ENCODE measurements at regions of chr17 and their contacts with region 1.

Region 1: GRCh38 chr17:76737082-76737675 is at the start of gene SRSF2:
- DNase-seq: peak; percentile 100
- ATAC-seq: peak; percentile 68
- H3K4me3 ChIP-seq: peak within 1 kb of the TSS; percentile 89
- H3K27ac ChIP-seq: peak within 1 kb of the TSS; percentile 89
- H3K4me1 ChIP-seq: peaks cover 37% of the 10 kb centered on the region
- H3K27me3 ChIP-seq: no peaks in the 10 kb centered on the region
- CTCF ChIP-seq: no peak
- total RNA-seq, gene SRSF2: 562 and 859 TPM in 2 replicates

Region 2: DNA sequence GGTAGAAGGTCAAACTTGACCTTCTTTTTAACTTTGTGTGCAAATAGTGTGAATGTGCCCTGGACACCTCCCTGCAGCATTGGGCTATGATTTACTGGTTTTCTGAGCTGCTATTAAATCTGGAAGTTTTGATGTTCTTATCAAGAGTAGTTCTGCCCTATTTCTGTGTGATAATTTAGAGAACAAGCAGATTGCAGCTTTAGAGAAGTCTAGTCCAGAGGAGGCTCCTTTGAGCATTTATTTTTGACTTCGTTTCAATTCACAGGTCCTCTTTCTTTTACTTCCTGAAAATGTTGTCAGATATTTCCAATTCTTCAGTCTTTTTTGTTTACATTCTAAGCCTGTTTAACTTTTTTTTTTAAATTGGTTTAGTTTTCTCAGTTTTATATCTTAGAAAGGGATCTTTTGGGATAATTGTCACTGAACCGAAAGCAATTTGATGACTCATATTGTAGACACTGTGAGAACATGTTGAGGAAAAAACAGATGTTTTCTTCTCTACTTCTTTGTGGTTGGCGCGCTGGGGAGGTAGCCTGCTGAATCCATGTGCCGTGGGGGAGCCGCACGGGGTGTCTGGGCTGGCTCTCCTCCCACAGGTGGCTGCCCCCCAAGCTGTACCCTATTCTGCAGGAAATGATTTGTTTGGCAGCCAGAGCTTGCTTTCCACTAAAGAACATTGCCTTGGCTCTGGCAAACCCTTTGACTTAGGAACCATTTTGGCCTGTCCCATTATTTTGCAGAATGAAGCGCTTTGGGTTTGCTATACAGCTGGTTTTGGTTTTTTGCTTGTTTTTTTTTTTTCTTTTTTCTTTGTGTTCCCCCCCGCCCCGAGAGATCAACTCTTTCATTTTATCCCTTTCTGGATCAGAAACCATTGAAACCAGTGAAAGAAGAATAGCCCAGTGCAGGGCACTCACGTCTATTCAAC is 54.1 kb after region 1 on chr17:
- CTCF ChIA-PET with region 1: no interaction called
- POLR2A ChIA-PET with region 1: no interaction called
- intact Hi-C with region 1: loop called (anchors 1 kb)
- DNase-seq: peak; percentile 83
- ATAC-seq: peak; percentile 84
- H3K4me3 ChIP-seq: peak overlapping the region; percentile 27; the same call in 1 of the 2 replicates
- H3K27ac ChIP-seq: peak overlapping the region; percentile 51
- H3K4me1 ChIP-seq: peaks cover 24% of the 10 kb centered on the region
- H3K27me3 ChIP-seq: no peaks in the 10 kb centered on the region
- CTCF ChIP-seq: no peak